Panc1 (cell line): ENCODE measurements at regions of chr10 and their contacts with region 1.

Region 1: DNA sequence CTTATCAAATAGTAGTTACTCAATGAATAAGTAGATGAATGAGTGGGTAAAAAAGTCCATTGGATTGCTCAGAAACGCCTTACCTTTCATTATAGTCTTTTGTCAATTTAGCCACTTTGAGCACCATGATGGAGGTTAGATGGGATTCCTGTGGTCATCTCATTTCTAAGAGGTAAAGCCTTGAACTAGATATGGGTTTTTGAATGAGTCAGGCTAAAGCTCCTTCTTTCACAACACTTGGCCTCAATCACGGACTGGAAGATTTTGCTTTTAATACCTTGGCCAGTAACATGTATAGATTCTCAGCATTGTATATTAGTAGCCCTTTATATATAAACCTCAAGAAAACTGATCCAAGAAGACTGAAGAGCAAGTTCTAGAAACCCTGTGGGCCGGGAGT is 99.7 kb upstream of the CCDC6 start:
- DNase-seq: no peak
- ATAC-seq: no peak
- H3K4me3 ChIP-seq: no peak overlapping the region
- H3K27ac ChIP-seq: no peak overlapping the region
- H3K4me1 ChIP-seq: no peaks in the 10 kb centered on the region
- H3K27me3 ChIP-seq: peaks cover 5% of the 10 kb centered on the region; the same call in 1 of the 2 replicates
- CTCF ChIP-seq: no peak

Region 2: GRCh38 chr10:59337201-59337652 is 668.8 kb before region 1 on chr10:
- CTCF ChIA-PET with region 1: interaction called, 15 read pairs
- POLR2A ChIA-PET with region 1: no interaction called
- in situ Hi-C with region 1: no loop called
- intact Hi-C with region 1: no loop called
- DNase-seq: no peak
- ATAC-seq: no peak
- H3K4me3 ChIP-seq: no peak overlapping the region
- H3K27ac ChIP-seq: no peak overlapping the region
- H3K4me1 ChIP-seq: no peaks in the 10 kb centered on the region
- H3K27me3 ChIP-seq: no peaks in the 10 kb centered on the region
- CTCF ChIP-seq: no peak